ENCODE measurements at regions of chr3 and their contacts with region 1.

Region 1: GRCh38 chr3:99817437-99818240 is at the start of gene CMSS1:
- DNase-seq: peak; percentile 91 to 98 (median 95)
- H3K4me3 ChIP-seq: peak within 1 kb of the TSS; percentile 67
- H3K4me3 Mint-ChIP-seq: peak within 1 kb of the TSS; percentile 93 to 98 (median 96)
- H3K27ac ChIP-seq: peak within 1 kb of the TSS; percentile 79
- H3K27ac Mint-ChIP-seq: peak within 1 kb of the TSS; percentile 96 to 100 (median 99)
- H3K4me1 ChIP-seq: peaks cover 23% of the 10 kb centered on the region
- H3K4me1 Mint-ChIP-seq: peaks cover 36 to 51% (median 46%) of the 10 kb centered on the region in 3 donors
- H3K27me3 ChIP-seq: no peaks in the 10 kb centered on the region
- H3K27me3 Mint-ChIP-seq: no peaks in the 10 kb centered on the region
- total RNA-seq, gene CMSS1: 140 to 143 TPM

Region 2: DNA sequence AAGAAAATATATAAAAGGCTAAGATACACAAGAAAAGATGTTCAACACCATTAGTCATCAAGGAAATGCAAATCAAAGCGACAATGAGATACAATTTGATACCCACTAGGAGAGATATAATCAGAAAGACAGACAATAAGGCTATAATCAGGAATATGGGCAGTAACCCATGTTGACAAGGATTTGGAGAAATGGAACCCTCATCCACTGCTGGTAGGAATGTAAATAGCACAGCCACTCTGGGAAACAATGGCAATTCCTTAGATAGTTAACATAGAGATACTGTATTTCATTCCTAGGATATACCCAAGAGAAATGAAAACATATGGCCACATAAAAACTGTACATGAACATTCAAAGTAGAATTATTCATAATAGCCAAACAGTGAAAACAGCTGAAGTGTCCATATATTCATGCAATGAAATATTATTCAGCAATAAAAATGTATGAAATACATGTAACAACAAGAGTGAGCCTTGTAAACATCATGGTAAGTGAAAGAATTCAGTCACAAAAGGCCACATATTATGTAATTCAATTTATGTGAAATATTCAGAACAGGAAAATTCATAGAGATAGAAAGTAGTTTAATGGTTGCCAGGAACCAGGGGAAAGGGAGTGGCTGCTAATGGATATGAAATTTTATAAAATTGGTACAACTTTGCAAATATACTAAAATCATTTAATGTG is 197.4 kb before region 1 on chr3:
- CTCF ChIA-PET with region 1: no interaction called
- POLR2A ChIA-PET with region 1: no interaction called
- DNase-seq: no peak
- H3K4me3 ChIP-seq: no peak overlapping the region
- H3K4me3 Mint-ChIP-seq: no peak overlapping the region
- H3K27ac ChIP-seq: no peak overlapping the region
- H3K27ac Mint-ChIP-seq: no peak overlapping the region
- H3K4me1 ChIP-seq: no peaks in the 10 kb centered on the region
- H3K4me1 Mint-ChIP-seq: no peaks in the 10 kb centered on the region
- H3K27me3 ChIP-seq: no peaks in the 10 kb centered on the region
- H3K27me3 Mint-ChIP-seq: peaks cover 0 to 1% of the 10 kb centered on the region in 2 donors

Region 3: DNA sequence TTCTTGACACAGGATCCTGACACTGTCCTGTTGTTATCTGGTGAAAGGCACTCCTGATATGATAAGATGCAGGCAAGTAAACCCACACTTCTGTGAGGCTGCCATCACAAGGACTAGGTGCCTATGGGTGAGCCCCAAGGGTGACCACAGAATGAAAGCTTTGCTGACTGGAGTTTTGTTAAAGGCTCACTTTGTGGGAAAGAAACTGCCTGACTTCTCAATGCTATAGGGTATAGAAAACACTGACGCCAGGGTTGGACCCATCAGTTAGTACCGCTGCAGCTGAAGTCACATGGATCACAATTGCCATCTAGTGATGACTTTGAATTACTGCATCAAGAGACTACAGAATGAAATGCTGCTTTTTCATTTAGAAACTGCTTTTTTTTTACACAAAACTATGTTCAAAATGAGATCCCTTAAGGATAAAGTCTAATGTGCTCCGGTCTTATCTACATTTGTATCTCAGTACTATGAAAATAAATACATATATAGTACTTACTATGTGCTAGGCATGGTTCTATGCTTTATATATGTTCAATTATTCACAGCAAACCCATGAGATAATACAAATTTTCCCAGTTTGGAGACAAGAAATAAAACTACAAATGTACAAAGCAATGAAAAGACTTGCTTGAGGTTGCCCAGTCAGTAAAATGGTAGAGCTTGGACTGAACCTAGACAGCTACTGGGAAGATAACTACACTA is 64.2 kb before region 1 on chr3:
- CTCF ChIA-PET with region 1: no interaction called
- POLR2A ChIA-PET with region 1: no interaction called
- DNase-seq: peak in 1 of 5 donors; percentile 13
- H3K4me3 ChIP-seq: no peak overlapping the region
- H3K4me3 Mint-ChIP-seq: no peak overlapping the region
- H3K27ac ChIP-seq: no peak overlapping the region
- H3K27ac Mint-ChIP-seq: no peak overlapping the region
- H3K4me1 ChIP-seq: no peaks in the 10 kb centered on the region
- H3K4me1 Mint-ChIP-seq: no peaks in the 10 kb centered on the region
- H3K27me3 ChIP-seq: no peaks in the 10 kb centered on the region
- H3K27me3 Mint-ChIP-seq: peaks cover 9 to 32% of the 10 kb centered on the region in 2 donors

Region 4: DNA sequence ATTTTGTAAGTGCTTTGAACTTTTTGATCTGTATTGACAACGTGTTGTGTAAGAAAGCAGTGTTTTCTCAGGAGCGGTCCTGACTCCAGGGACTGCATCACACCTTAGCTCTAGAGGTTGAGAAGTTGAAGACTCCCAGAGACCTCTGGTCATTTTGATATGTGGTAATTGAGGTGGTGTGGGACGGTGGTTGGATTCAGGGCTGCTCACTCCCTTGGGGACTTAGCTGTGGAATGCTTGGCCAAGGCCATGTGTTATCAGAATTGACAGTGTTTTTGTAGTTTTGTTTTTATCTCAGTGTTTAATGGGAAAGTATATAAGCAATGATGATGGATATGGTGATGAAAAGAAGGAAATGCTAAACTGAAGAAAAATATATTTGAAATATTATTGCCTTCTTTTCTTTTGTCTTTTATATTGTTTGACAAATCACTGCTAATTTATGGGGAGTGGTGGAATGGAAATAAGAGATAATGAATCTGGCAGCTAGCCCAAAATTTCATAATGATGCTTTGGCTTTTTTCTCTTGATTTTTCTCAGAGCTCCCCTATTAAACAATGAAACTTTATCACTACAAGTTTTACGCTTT is 16.1 kb after region 1 on chr3:
- CTCF ChIA-PET with region 1: interaction called, 18 read pairs
- POLR2A ChIA-PET with region 1: interaction called, 3 read pairs
- DNase-seq: no peak
- H3K4me3 ChIP-seq: no peak overlapping the region
- H3K4me3 Mint-ChIP-seq: no peak overlapping the region
- H3K27ac ChIP-seq: no peak overlapping the region
- H3K27ac Mint-ChIP-seq: no peak overlapping the region
- H3K4me1 ChIP-seq: no peaks in the 10 kb centered on the region
- H3K4me1 Mint-ChIP-seq: peaks cover 0 to 5% (median 0%) of the 10 kb centered on the region in 3 donors
- H3K27me3 ChIP-seq: no peaks in the 10 kb centered on the region
- H3K27me3 Mint-ChIP-seq: no peaks in the 10 kb centered on the region

Region 5: DNA sequence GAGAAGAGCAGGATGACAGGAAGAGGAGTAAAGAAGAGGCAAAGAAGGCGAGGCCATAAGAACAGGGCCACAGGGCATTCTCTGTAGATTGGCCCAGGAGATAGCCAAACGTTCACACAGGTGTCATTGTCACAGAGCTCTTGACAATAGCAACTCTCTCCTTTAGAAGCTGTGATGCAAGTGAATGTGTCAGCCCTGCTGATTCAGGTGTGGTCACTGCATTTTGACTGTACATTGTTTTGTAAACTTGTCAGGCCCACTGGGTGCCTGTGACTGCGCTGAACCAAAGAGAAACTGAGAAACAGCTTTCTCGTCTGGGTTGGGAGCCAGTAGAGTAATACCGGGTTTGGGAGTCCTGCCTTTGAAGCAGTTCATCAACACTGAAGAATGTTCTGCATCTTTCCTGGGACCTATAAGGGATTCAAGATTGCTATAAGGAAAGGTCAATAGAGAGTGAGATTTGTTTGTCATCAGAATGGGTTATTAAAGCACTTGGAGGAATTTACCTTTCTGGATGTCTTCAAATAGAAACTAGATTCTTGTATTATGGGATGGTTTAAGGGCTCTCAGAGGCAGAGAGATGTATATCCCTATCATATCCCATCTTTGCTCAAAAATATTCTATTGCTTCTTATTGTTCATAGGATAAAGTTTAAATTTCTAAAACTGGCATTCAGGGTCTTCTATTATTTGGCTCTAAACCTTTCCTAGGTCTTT is 720.1 kb after region 1 on chr3:
- CTCF ChIA-PET with region 1: no interaction called
- POLR2A ChIA-PET with region 1: no interaction called
- DNase-seq: no peak
- H3K4me3 ChIP-seq: no peak overlapping the region
- H3K4me3 Mint-ChIP-seq: no peak overlapping the region
- H3K27ac ChIP-seq: no peak overlapping the region
- H3K27ac Mint-ChIP-seq: no peak overlapping the region
- H3K4me1 ChIP-seq: no peaks in the 10 kb centered on the region
- H3K4me1 Mint-ChIP-seq: no peaks in the 10 kb centered on the region
- H3K27me3 ChIP-seq: no peaks in the 10 kb centered on the region
- H3K27me3 Mint-ChIP-seq: peaks cover 2 to 9% of the 10 kb centered on the region in 2 donors